WTC11 (cell line): ENCODE measurements at regions of chr5 and their contacts with region 1.

Region 1: GRCh38 chr5:170896779-170897178 is 35.0 kb downstream of the RANBP17 start:
- DNase-seq: peak; percentile 85
- ATAC-seq: peak; percentile 100
- H3K4me3 Mint-ChIP-seq: no peak overlapping the region
- H3K27ac Mint-ChIP-seq: no peak overlapping the region
- H3K4me1 Mint-ChIP-seq: peaks cover 5% of the 10 kb centered on the region; the same call in 1 of the 2 replicates
- H3K27me3 Mint-ChIP-seq: no peaks in the 10 kb centered on the region; the same call in 1 of the 2 replicates
- CTCF ChIP-seq: peak; percentile 77

Region 2: GRCh38 chr5:170809551-170809950 is 87.2 kb before region 1 on chr5:
- CTCF ChIA-PET with region 1: interaction called, 12 read pairs
- POLR2A ChIA-PET with region 1: no interaction called
- DNase-seq: peak; percentile 30
- ATAC-seq: peak; percentile 98
- H3K4me3 Mint-ChIP-seq: no peak overlapping the region
- H3K27ac Mint-ChIP-seq: no peak overlapping the region
- H3K4me1 Mint-ChIP-seq: peaks cover 11% of the 10 kb centered on the region
- H3K27me3 Mint-ChIP-seq: no peaks in the 10 kb centered on the region
- CTCF ChIP-seq: no peak

Region 3: GRCh38 chr5:171207256-171207847 is 310.6 kb after region 1 on chr5:
- CTCF ChIA-PET with region 1: no interaction called
- POLR2A ChIA-PET with region 1: no interaction called
- DNase-seq: no peak
- ATAC-seq: peak; percentile 43
- H3K4me3 Mint-ChIP-seq: no peak overlapping the region
- H3K27ac Mint-ChIP-seq: no peak overlapping the region
- H3K4me1 Mint-ChIP-seq: peaks cover 10% of the 10 kb centered on the region
- H3K27me3 Mint-ChIP-seq: no peaks in the 10 kb centered on the region
- CTCF ChIP-seq: no peak